Activated B cell treated with CpG ODN at 0.5 μM for 24 hours (primary cell): ENCODE measurements at regions of chr3 and their contacts with region 1.

Region 1: GRCh38 chr3:186534113-186534669 is 10.0 kb downstream of the CRYGS start:
- DNase-seq: no peak
- ATAC-seq: peak; percentile 82
- H3K4me3 Mint-ChIP-seq: peak overlapping the region; percentile 77
- H3K27ac Mint-ChIP-seq: peak overlapping the region; percentile 97
- H3K4me1 Mint-ChIP-seq: peaks cover 83% of the 10 kb centered on the region
- H3K27me3 Mint-ChIP-seq: no peaks in the 10 kb centered on the region
- CTCF ChIP-seq: no peak

Region 2: GRCh38 chr3:185605566-185605965 is 928.6 kb before region 1 on chr3:
- CTCF ChIA-PET with region 1: no interaction called
- POLR2A ChIA-PET with region 1: no interaction called
- intact Hi-C with region 1: no loop called
- DNase-seq: no peak
- ATAC-seq: no peak
- H3K4me3 Mint-ChIP-seq: no peak overlapping the region
- H3K27ac Mint-ChIP-seq: no peak overlapping the region
- H3K4me1 Mint-ChIP-seq: no peaks in the 10 kb centered on the region
- H3K27me3 Mint-ChIP-seq: no peaks in the 10 kb centered on the region
- CTCF ChIP-seq: no peak

Region 3: DNA sequence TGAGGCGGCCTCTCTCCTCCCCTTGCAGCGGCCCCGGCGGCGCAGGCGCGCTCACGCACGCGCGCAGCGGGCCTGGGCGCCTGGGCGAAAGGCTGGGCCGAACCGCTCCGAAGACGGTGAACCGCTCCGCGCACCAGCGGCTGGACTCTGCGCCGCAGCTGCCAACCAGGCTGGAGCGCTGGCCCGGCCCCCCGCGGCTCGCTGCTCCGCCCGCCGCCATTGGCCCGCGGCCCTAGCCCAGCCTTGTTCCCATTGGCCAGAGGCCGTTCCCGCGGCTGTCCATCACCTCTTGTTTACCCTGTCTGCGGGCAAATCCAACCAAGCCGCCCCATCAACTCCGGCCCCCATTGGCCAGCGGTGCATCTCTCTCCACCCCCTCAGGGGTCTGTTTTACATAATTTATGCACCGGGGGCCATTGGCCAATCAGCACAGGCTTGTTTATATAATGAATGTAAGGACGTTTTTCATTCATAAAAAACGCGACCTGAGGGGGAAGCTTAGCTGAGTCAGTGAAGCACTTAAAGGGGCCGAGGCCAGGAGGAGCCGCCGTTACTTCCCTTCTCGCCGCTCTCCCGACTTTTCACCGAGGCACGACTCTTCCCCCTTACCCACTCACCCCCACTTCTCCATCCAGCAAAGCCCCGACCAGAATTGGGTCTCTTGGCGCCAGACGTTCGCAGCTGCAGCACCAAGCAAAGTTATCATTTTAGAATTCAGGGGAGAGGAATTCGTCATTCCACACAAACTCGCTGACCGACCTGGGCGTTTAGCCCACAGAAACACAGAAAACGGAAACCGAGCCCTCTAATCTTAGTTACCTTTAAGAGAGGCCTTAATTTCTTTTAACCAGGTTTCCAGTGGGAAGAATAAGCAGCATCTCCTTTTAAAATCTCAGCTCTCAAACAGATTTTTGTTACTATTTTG is 425.0 kb before region 1 on chr3 and contains the start of gene ETV5:
- CTCF ChIA-PET with region 1: interaction called, 3 read pairs
- POLR2A ChIA-PET with region 1: interaction called, 11 read pairs
- intact Hi-C with region 1: loop called (anchors 1 kb)
- DNase-seq: peak; percentile 85
- ATAC-seq: peak; percentile 95
- H3K4me3 Mint-ChIP-seq: peak within 1 kb of the TSS; percentile 95
- H3K27ac Mint-ChIP-seq: peak within 1 kb of the TSS; percentile 80
- H3K4me1 Mint-ChIP-seq: peaks cover 35% of the 10 kb centered on the region
- H3K27me3 Mint-ChIP-seq: peaks cover 42% of the 10 kb centered on the region
- CTCF ChIP-seq: no peak
- total RNA-seq, gene ETV5: 0.49 and 0.89 TPM in 2 replicates

Region 4: DNA sequence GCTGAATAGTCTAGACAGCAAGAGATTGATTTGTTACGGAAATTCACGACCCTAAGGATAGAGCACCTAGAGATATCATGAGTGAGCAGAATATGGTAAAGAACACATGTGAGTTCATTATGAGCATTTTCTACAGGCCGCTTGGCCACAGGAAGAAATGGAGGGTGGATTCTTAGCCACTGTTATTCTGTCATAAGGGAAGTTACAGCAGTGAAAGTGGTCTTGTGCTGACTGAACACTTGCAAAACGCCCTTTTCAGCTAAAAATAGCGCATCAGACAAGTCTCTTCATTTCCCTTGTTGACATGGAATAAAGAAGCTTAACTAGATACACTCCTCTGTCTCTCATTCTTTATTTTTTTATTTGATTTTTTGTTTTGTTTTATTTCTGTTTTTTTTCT is 192.0 kb before region 1 on chr3:
- CTCF ChIA-PET with region 1: no interaction called
- POLR2A ChIA-PET with region 1: no interaction called
- intact Hi-C with region 1: loop called (anchors 5 kb)
- DNase-seq: no peak
- ATAC-seq: peak; percentile 66
- H3K4me3 Mint-ChIP-seq: no peak overlapping the region
- H3K27ac Mint-ChIP-seq: peak overlapping the region; percentile 72
- H3K4me1 Mint-ChIP-seq: peaks cover 54% of the 10 kb centered on the region
- H3K27me3 Mint-ChIP-seq: no peaks in the 10 kb centered on the region
- CTCF ChIP-seq: no peak

Region 5: GRCh38 chr3:186425788-186426730 is 108.1 kb before region 1 on chr3:
- CTCF ChIA-PET with region 1: no interaction called
- POLR2A ChIA-PET with region 1: no interaction called
- intact Hi-C with region 1: loop called (anchors 5 kb)
- DNase-seq: no peak
- ATAC-seq: peak; percentile 42
- H3K4me3 Mint-ChIP-seq: no peak overlapping the region
- H3K27ac Mint-ChIP-seq: no peak overlapping the region
- H3K4me1 Mint-ChIP-seq: peaks cover 22% of the 10 kb centered on the region
- H3K27me3 Mint-ChIP-seq: no peaks in the 10 kb centered on the region
- CTCF ChIP-seq: no peak

Region 6: GRCh38 chr3:186493525-186494255 is 40.5 kb before region 1 on chr3:
- CTCF ChIA-PET with region 1: no interaction called
- POLR2A ChIA-PET with region 1: no interaction called
- intact Hi-C with region 1: no loop called
- DNase-seq: no peak
- ATAC-seq: no peak
- H3K4me3 Mint-ChIP-seq: no peak overlapping the region
- H3K27ac Mint-ChIP-seq: no peak overlapping the region
- H3K4me1 Mint-ChIP-seq: peaks cover 2% of the 10 kb centered on the region
- H3K27me3 Mint-ChIP-seq: no peaks in the 10 kb centered on the region
- CTCF ChIP-seq: no peak

Region 7: DNA sequence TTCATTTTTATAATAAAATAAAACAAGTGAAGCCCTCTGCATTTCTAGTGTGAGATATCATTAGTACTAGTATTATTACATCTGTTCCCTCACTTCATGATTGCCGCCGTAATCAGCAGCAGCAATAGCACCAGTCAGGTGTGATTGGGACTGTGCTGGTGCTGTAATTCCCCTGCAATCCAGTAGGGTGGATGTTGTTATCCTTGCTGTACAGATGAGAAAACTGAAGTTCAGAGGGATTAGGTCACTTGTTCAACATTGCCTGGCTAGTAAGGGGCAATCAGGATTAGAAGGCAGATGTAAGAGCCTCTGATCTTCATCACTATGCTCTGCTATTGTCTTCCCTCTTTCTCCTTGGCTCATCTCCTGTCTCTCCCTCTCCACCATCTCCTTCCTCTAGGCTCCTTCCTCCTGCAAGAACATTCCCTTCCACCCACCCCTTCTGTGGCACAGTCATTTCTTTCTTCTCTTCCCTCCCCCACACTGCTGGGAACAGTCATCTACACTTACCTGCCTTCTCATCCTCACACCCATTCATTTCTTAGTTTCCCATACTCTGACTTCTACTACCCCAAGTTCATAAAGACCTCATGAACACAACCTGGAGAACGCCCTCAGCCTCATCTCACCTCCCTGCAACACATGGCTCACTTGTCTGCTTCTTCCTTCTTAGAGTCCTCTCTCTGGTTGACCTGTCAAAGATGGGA is 19.7 kb before region 1 on chr3:
- CTCF ChIA-PET with region 1: interaction called, 24 read pairs
- POLR2A ChIA-PET with region 1: interaction called, 50 read pairs
- intact Hi-C with region 1: loop called (anchors 1 kb)
- DNase-seq: no peak
- ATAC-seq: no peak
- H3K4me3 Mint-ChIP-seq: no peak overlapping the region
- H3K27ac Mint-ChIP-seq: no peak overlapping the region
- H3K4me1 Mint-ChIP-seq: peaks cover 74% of the 10 kb centered on the region
- H3K27me3 Mint-ChIP-seq: peaks cover 7% of the 10 kb centered on the region
- CTCF ChIP-seq: no peak

Region 8: GRCh38 chr3:186570096-186570940 is 36.1 kb after region 1 on chr3 and contains the start of gene DNAJB11:
- CTCF ChIA-PET with region 1: interaction called, 4 read pairs
- POLR2A ChIA-PET with region 1: interaction called, 16 read pairs
- intact Hi-C with region 1: loop called (anchors 1 kb)
- DNase-seq: peak; percentile 91
- ATAC-seq: peak; percentile 82
- H3K4me3 Mint-ChIP-seq: peak within 1 kb of the TSS; percentile 94
- H3K27ac Mint-ChIP-seq: peak within 1 kb of the TSS; percentile 97
- H3K4me1 Mint-ChIP-seq: peaks cover 56% of the 10 kb centered on the region
- H3K27me3 Mint-ChIP-seq: no peaks in the 10 kb centered on the region
- CTCF ChIP-seq: no peak
- total RNA-seq, gene DNAJB11: 51.3 and 52.5 TPM in 2 replicates

Region 9: DNA sequence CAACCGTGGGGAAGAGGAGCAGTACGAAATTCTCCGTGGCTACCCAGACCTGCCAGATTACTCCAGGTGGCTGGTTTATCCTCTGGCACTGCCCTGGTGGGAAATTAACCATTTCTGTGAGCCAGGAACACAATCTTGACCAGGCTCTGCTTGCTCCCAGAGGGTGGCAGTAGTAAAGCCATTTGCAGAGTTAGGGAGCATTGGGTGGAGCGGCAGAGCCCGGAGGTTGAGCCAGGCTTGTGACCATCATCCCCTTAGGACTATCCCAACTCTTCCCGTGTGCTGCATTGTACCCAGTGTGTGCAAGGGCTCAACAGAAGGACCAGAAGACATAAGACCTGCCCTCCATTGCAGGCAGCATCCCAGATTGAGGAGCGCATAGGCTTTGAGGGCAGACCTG is 188.3 kb after region 1 on chr3:
- CTCF ChIA-PET with region 1: no interaction called
- POLR2A ChIA-PET with region 1: no interaction called
- intact Hi-C with region 1: no loop called
- DNase-seq: no peak
- ATAC-seq: no peak
- H3K4me3 Mint-ChIP-seq: no peak overlapping the region
- H3K27ac Mint-ChIP-seq: no peak overlapping the region
- H3K4me1 Mint-ChIP-seq: no peaks in the 10 kb centered on the region
- H3K27me3 Mint-ChIP-seq: peaks cover 7% of the 10 kb centered on the region
- CTCF ChIP-seq: no peak

Region 10: DNA sequence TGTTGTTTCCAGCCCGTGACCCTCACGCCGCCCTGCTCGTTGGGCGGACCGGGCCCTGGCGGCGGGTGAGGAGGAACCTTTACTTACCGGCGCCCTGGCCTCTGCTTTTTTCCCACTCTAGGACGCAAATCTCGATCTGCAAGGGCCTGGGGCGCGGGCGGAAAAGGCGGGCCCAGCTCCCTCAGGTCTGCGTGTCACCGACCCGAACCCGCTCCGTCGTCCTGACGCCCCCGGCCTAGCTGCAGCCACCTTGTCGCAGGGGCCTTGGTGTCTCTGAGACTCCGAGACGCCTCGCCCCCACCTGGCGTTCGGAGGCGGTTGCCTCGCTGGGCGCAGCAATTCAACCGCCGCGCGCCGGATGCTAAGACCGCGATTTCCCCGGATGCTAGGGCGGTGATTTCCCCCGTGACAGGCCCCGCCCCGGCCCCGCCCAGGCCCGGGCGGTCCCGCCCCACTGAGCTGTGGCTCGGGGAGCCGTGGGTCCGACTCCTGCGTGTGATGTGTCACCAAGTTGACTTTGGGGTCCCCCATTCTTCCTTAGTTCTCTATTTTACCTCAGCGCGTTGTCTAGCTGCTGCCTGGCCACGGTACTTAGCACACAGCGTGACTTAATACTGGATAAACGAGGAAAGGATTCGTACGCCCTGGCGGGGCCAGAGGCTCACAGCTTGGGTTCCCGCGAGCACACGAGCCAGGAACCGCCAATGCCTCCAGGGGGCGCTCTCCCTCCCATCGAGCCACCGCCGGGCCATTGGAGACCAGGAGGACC is 605.1 kb after region 1 on chr3 and contains the start of gene RPL39L:
- CTCF ChIA-PET with region 1: interaction called, 3 read pairs
- POLR2A ChIA-PET with region 1: no interaction called
- intact Hi-C with region 1: loop called (anchors 10 kb)
- DNase-seq: peak; percentile 95
- ATAC-seq: peak; percentile 95
- H3K4me3 Mint-ChIP-seq: peak within 1 kb of the TSS; percentile 90
- H3K27ac Mint-ChIP-seq: peak within 1 kb of the TSS; percentile 95
- H3K4me1 Mint-ChIP-seq: peaks cover 19% of the 10 kb centered on the region
- H3K27me3 Mint-ChIP-seq: no peaks in the 10 kb centered on the region
- CTCF ChIP-seq: no peak
- total RNA-seq, gene RPL39L: 4.7 and 6.9 TPM in 2 replicates